Tibial artery (tissue), 4 donors: ENCODE measurements at regions of chr2 and their contacts with region 1.

Region 1: GRCh38 chr2:96024336-96025193 is 10.2 kb downstream of the GPAT2 start:
- DNase-seq: no peak
- H3K4me3 ChIP-seq: no peak overlapping the region
- H3K27ac ChIP-seq: no peak overlapping the region
- H3K4me1 ChIP-seq: peaks cover 0 to 4% (median 0%) of the 10 kb centered on the region in 4 donors
- H3K27me3 ChIP-seq: no peaks in the 10 kb centered on the region
- CTCF ChIP-seq: no peak

Region 2: GRCh38 chr2:96116879-96117697 is 92.5 kb after region 1 on chr2:
- intact Hi-C with region 1: loop called (anchors 10 kb)
- DNase-seq: no peak
- H3K4me3 ChIP-seq: peak overlapping the region; percentile 41 to 53
- H3K27ac ChIP-seq: peak overlapping the region in 1 of 2 donors; percentile 2
- H3K4me1 ChIP-seq: peaks cover 0 to 21% (median 12%) of the 10 kb centered on the region in 4 donors
- H3K27me3 ChIP-seq: peaks cover 0 to 73% of the 10 kb centered on the region in 2 donors
- CTCF ChIP-seq: peak; percentile 72 to 85

Region 3: GRCh38 chr2:96136129-96136720 is 111.7 kb after region 1 on chr2:
- intact Hi-C with region 1: no loop called
- DNase-seq: no peak
- H3K4me3 ChIP-seq: no peak overlapping the region
- H3K27ac ChIP-seq: no peak overlapping the region
- H3K4me1 ChIP-seq: no peaks in the 10 kb centered on the region
- H3K27me3 ChIP-seq: peaks cover 0 to 47% of the 10 kb centered on the region in 2 donors
- CTCF ChIP-seq: no peak